HCT116 (cell line): ENCODE measurements at regions of chr5 and their contacts with region 1.

Region 1: GRCh38 chr5:150758531-150759333 is at the start of gene DCTN4:
- DNase-seq: peak; percentile 99
- ATAC-seq: peak; percentile 94
- H3K4me3 ChIP-seq: peak within 1 kb of the TSS; percentile 94 to 95
- H3K27ac ChIP-seq: peak within 1 kb of the TSS; percentile 76
- H3K4me1 ChIP-seq: peaks cover 5 to 22% of the 10 kb centered on the region in 2 experiments
- H3K27me3 ChIP-seq: no peaks in the 10 kb centered on the region
- CTCF ChIP-seq: no peak
- POLR2A ChIP-seq: peak; percentile 63
- RAD21 ChIP-seq: no peak
- total RNA-seq, gene DCTN4: 78.8 TPM

Region 2: GRCh38 chr5:150700594-150701293 is 58.0 kb before region 1 on chr5 and contains the start of gene RBM22:
- CTCF ChIA-PET with region 1: interaction called, 4 read pairs
- POLR2A ChIA-PET with region 1: no interaction called
- RAD21 ChIA-PET with region 1: interaction called in 1 of 2 experiments, 3 read pairs
- intact Hi-C with region 1: loop called (anchors 5 kb)
- DNase-seq: peak; percentile 79
- ATAC-seq: peak; percentile 95
- H3K4me3 ChIP-seq: peak within 1 kb of the TSS; percentile 86 to 87
- H3K27ac ChIP-seq: peak within 1 kb of the TSS; percentile 76
- H3K4me1 ChIP-seq: peaks cover 2 to 15% of the 10 kb centered on the region in 2 experiments; a peak in 3 of 4 replicates
- H3K27me3 ChIP-seq: no peaks in the 10 kb centered on the region
- CTCF ChIP-seq: peak; percentile 32 to 69 (median 55); a peak in 5 of 6 replicates
- POLR2A ChIP-seq: peak; percentile 87
- RAD21 ChIP-seq: peak; percentile 22; the same call in 1 of the 2 replicates
- total RNA-seq, gene RBM22: 61.4 TPM

Region 3: DNA sequence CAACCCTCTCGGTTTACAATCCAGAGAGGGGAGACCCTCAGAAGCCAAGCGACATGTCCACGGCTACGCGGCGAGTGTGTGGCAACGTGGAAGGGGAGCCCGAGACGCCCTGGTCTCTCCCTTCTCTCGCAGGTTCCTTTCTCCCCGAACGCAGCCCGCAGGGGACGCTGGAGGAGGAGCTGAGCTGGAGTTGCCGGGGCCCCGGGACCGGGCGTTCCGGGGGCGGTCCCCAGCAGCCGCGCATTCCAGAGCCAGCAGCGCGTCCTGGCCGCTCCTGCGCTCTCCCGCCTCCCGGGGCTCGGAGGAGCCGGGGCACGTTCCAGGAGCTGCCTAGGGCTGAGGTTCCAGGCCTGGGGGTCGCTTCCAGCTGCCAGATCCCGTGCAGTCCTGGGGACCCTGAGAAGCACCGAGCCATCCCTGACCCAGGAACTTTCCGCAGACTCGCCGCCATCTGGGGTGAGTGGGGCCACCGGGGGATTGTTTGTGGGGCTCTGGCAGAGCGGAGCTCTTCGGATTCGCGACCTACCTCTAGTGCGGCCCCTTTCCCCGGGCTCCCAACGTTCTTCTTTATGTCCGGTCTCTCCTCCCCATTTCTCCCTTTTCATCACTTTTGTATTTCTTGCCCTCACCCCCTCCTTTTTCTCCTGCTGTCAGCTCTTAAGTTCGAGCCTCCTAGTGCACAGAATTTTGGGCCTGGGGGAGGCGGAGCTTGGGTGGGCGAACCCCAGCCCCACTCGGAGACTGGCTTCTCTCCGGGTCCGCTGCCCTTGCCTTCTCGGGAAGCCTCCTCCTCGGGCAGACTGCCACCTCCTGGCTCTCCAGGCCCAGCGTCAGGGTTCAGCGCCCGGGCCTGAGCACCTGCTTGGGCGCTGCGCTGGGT is 20.0 kb after region 1 on chr5 and contains the start of gene SMIM3:
- CTCF ChIA-PET with region 1: interaction called, 3 read pairs
- POLR2A ChIA-PET with region 1: interaction called, 9 read pairs
- RAD21 ChIA-PET with region 1: interaction called in 1 of 2 experiments, 3 read pairs
- intact Hi-C with region 1: loop called (anchors 2 kb)
- DNase-seq: no peak
- ATAC-seq: peak; percentile 85
- H3K4me3 ChIP-seq: peak within 1 kb of the TSS; percentile 74 to 85
- H3K27ac ChIP-seq: peak within 1 kb of the TSS; percentile 89
- H3K4me1 ChIP-seq: peaks cover 42 to 58% of the 10 kb centered on the region in 2 experiments
- H3K27me3 ChIP-seq: no peaks in the 10 kb centered on the region
- CTCF ChIP-seq: peak in 2 of 3 experiments; percentile 56 to 62; a peak in 4 of 6 replicates
- POLR2A ChIP-seq: peak; percentile 70
- RAD21 ChIP-seq: no peak
- total RNA-seq, gene SMIM3: 35.4 TPM